Gastrocnemius medialis (tissue), 4 donors: ENCODE measurements at regions of chr6 and their contacts with region 1.

Region 1: GRCh38 chr6:72411872-72412708 is 209.8 kb upstream of the KCNQ5 start:
- DNase-seq: peak; percentile 34 to 63
- ATAC-seq: peak; percentile 79 to 82
- H3K4me3 ChIP-seq: no peak overlapping the region
- H3K27ac ChIP-seq: no peak overlapping the region
- H3K4me1 ChIP-seq: no peaks in the 10 kb centered on the region
- H3K27me3 ChIP-seq: no peaks in the 10 kb centered on the region
- CTCF ChIP-seq: peak in 4 of 5 experiments; percentile 98 to 100 (median 99)
- POLR2A ChIP-seq: no peak

Region 2: DNA sequence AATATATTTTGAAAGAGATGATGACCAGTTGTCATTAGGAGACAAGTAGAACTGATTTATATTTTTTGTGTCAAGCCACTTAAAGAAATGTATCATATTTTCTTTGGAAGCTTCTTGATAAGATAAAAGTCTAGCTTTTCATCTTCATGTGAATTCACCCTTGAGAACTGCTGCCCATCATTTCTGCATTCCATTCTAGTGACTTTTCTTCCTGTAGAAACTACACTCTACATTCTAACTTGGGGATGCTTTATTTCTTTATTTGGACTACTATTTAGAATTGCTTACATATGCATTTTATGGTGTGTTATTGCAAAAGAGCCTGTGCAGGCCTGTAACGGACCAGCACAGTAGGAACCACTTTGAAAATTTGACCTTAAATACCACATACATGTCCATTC is 125.2 kb before region 1 on chr6:
- in situ Hi-C with region 1: no loop called
- intact Hi-C with region 1: no loop called
- DNase-seq: no peak
- ATAC-seq: no peak
- H3K4me3 ChIP-seq: no peak overlapping the region
- H3K27ac ChIP-seq: no peak overlapping the region
- H3K4me1 ChIP-seq: no peaks in the 10 kb centered on the region
- H3K27me3 ChIP-seq: no peaks in the 10 kb centered on the region
- CTCF ChIP-seq: no peak
- POLR2A ChIP-seq: no peak

Region 3: GRCh38 chr6:72321788-72322187 is 90.3 kb before region 1 on chr6:
- in situ Hi-C with region 1: no loop called
- intact Hi-C with region 1: no loop called
- DNase-seq: no peak
- ATAC-seq: no peak
- H3K4me3 ChIP-seq: no peak overlapping the region
- H3K27ac ChIP-seq: no peak overlapping the region
- H3K4me1 ChIP-seq: no peaks in the 10 kb centered on the region
- H3K27me3 ChIP-seq: no peaks in the 10 kb centered on the region
- CTCF ChIP-seq: no peak
- POLR2A ChIP-seq: no peak

Region 4: DNA sequence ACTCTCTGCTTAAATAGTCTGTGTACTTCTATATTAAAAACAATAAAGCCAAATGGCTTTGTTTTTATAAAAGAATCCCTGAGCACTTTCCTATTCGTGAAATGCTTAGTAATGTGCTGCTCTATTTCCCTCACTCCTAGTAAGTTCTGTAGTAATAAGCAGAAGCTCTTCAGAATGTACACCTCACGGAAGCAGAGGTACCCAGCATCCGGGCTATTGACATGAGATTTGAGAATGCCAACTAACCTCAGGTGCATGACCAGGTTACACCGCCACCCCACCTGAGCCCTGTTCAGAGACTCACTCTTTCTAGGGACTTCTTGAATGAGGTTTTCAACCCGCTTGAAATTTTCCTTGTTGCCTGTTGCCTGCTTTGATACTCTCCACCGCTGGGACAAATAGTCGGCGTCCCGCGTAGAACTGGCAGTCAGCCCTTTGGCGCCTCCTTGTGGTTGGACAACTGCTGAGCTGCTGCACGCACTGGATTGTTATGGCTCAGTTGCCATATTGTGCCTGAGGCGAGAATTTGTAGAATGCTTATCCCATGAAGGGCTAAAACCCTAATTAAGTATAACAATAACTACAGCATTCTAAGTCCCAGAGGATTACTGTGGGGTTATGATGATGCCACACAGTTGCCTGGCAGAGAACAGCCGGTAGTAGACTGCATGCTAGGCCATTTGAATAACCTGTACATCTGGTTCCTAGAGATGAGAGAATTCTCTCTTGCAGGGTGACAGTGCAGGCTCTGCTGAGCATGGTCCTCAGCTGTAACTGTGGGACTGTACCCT is 717.8 kb after region 1 on chr6:
- in situ Hi-C with region 1: loop called (anchors 5 to 10 kb)
- intact Hi-C with region 1: loop called (anchors 1 kb)
- DNase-seq: peak; percentile 61 to 75
- ATAC-seq: peak; percentile 63 to 85
- H3K4me3 ChIP-seq: peak overlapping the region in 2 of 4 donors; percentile 15 to 38
- H3K27ac ChIP-seq: no peak overlapping the region
- H3K4me1 ChIP-seq: no peaks in the 10 kb centered on the region
- H3K27me3 ChIP-seq: no peaks in the 10 kb centered on the region
- CTCF ChIP-seq: peak; percentile 90 to 94 (median 91)
- POLR2A ChIP-seq: no peak

Region 5: DNA sequence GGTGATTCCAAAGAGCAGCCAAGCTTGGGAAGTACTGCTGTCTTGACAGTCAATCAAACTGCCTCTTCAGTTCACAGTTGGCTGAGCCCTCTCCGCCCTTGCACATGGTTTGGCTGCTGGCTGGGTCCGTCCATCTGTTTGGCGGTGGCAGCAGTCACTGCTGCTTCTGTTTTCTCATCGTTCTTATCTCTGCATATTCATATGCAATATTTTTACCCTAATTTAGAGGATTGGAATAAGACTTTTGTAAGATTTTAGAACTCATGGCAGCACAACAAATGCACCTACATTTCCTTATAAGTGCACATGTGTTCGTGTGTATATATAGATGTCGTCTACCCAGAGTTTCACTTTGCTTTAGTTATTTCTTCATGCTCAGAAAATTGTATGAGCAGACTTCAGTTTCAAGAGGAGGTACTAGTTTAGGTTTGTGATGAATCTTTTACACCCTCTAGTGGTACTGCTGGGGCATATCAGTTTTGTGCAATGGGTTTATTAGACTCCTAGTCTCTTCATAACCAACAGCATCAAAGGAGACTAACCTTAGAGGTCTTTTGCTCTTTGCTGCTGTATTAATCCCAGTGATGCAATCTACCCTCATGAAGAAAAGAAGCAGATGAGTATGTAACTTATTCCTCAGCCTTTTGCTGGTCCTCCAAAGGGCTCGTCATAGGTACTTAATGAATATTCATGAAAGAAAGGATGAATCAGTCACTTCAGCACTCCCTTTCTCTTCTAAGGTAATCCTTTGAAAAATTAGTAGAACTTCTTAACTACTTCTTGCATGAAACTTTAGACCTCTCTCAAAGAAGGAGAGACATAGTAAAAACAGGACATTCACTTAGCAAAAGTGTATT is 768.9 kb after region 1 on chr6:
- in situ Hi-C with region 1: loop called in 1 of 4 experiments (anchors 5 kb)
- intact Hi-C with region 1: loop called (anchors 1 kb)
- DNase-seq: peak in 1 of 2 donors; percentile 30
- ATAC-seq: peak; percentile 91 to 95
- H3K4me3 ChIP-seq: peak overlapping the region in 3 of 4 donors; percentile 11 to 33 (median 21)
- H3K27ac ChIP-seq: peak overlapping the region in 3 of 4 donors; percentile 15 to 62 (median 44)
- H3K4me1 ChIP-seq: peaks cover 7 to 10% of the 10 kb centered on the region in 2 donors
- H3K27me3 ChIP-seq: no peaks in the 10 kb centered on the region
- CTCF ChIP-seq: peak; percentile 58 to 89 (median 76)
- POLR2A ChIP-seq: no peak

Region 6: DNA sequence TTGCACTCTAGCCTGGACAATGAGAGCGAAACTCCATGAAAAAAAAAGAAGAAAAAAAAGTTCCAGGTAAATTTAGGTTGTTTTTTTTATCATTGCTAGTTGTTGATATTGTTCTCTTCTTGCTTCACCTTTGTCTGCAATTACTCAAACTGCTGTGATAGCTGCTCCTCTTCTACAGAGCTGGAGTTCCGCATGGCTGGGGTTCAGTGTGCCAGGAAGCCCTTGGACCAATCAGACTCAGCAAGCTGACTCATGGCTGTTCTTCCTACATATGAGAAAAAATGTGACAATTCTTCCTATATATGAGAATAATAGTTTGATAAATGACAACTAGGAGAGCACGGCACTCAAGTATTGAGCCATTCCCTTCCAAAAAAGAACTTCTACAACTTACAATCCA is 913.6 kb after region 1 on chr6:
- in situ Hi-C with region 1: no loop called
- intact Hi-C with region 1: loop called (anchors 2 kb)
- DNase-seq: no peak
- ATAC-seq: no peak
- H3K4me3 ChIP-seq: no peak overlapping the region
- H3K27ac ChIP-seq: no peak overlapping the region
- H3K4me1 ChIP-seq: no peaks in the 10 kb centered on the region
- H3K27me3 ChIP-seq: no peaks in the 10 kb centered on the region
- CTCF ChIP-seq: no peak
- POLR2A ChIP-seq: no peak